ENCODE measurements at regions of chr7 and their contacts with region 1.

Region 1: GRCh38 chr7:42931834-42932651 is at the starts of genes MRPL32 and PSMA2:
- DNase-seq: peak; percentile 97
- H3K4me3 Mint-ChIP-seq: peak within 1 kb of the TSS; percentile 99
- H3K27ac Mint-ChIP-seq: peak within 1 kb of the TSS; percentile 91
- H3K4me1 Mint-ChIP-seq: peaks cover 69% of the 10 kb centered on the region
- H3K27me3 Mint-ChIP-seq: no peaks in the 10 kb centered on the region
- total RNA-seq, gene MRPL32: 81.5 and 82.0 TPM in 2 replicates
- total RNA-seq, gene PSMA2: 187 and 194 TPM in 2 replicates

Region 2: DNA sequence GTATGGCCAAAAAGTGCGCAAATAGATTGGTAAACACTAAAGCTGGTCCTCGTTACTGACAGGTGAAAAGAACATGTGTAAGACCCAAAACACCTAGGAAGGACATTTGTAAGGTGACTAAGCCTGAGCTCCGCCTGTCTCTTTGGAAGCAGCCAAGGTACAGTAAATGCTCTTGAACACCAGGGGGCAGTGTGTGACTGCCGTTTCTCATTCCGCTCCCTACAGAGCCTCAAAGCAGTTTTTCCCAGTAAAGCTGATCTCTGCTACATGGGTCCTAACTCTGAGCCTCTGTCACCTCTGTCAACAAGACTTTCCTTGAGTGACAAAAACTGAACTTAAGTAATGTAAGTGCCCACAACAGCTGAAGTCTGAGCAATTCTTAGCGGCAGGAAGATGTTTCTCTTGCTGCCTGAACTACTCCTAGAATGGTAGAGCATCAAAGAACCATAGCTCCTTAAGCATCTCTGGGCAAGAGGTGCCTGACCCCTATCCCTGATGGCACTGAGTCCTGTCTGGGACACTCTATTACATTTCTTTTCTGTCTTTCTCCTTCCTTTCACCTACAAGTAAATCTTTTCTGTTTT is 991.2 kb before region 1 on chr7:
- intact Hi-C with region 1: loop called (anchors 5 kb)
- DNase-seq: peak; percentile 35
- H3K4me3 Mint-ChIP-seq: no peak overlapping the region
- H3K27ac Mint-ChIP-seq: no peak overlapping the region
- H3K4me1 Mint-ChIP-seq: peaks cover 26% of the 10 kb centered on the region
- H3K27me3 Mint-ChIP-seq: peaks cover 22% of the 10 kb centered on the region

Region 3: GRCh38 chr7:42886129-42886528 is 45.9 kb before region 1 on chr7:
- intact Hi-C with region 1: loop called (anchors 2 kb)
- DNase-seq: no peak
- H3K4me3 Mint-ChIP-seq: no peak overlapping the region
- H3K27ac Mint-ChIP-seq: no peak overlapping the region
- H3K4me1 Mint-ChIP-seq: peaks cover 25% of the 10 kb centered on the region
- H3K27me3 Mint-ChIP-seq: peaks cover 7% of the 10 kb centered on the region

Region 4: GRCh38 chr7:42945821-42946626 is 14.0 kb after region 1 on chr7:
- intact Hi-C with region 1: no loop called
- DNase-seq: peak; percentile 38
- H3K4me3 Mint-ChIP-seq: peak overlapping the region; percentile 73
- H3K27ac Mint-ChIP-seq: peak overlapping the region; percentile 83
- H3K4me1 Mint-ChIP-seq: peaks cover 12% of the 10 kb centered on the region
- H3K27me3 Mint-ChIP-seq: no peaks in the 10 kb centered on the region

Region 5: DNA sequence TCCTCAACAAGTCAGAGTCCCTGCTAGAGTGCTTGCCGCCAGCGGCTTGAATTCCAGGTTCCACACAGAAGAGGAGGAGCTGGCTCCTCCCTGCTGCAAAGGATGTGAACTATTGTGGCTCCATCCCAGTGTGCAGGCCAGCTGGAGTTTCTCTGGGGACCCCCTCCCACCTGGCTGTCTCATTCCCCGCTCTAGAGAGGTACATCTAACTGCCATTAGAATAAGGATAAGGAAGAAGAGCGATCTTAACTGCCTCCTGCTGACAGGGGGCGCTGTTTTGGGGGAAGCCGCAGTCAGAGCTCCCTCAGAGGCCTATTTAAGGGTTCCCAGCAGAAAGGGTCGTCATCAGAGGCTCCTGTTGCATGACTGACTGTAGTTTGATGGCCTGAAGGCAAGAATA is 139.6 kb after region 1 on chr7:
- intact Hi-C with region 1: loop called (anchors 5 kb)
- DNase-seq: no peak
- H3K4me3 Mint-ChIP-seq: no peak overlapping the region
- H3K27ac Mint-ChIP-seq: no peak overlapping the region
- H3K4me1 Mint-ChIP-seq: peaks cover 25% of the 10 kb centered on the region
- H3K27me3 Mint-ChIP-seq: peaks cover 9% of the 10 kb centered on the region

Region 6: DNA sequence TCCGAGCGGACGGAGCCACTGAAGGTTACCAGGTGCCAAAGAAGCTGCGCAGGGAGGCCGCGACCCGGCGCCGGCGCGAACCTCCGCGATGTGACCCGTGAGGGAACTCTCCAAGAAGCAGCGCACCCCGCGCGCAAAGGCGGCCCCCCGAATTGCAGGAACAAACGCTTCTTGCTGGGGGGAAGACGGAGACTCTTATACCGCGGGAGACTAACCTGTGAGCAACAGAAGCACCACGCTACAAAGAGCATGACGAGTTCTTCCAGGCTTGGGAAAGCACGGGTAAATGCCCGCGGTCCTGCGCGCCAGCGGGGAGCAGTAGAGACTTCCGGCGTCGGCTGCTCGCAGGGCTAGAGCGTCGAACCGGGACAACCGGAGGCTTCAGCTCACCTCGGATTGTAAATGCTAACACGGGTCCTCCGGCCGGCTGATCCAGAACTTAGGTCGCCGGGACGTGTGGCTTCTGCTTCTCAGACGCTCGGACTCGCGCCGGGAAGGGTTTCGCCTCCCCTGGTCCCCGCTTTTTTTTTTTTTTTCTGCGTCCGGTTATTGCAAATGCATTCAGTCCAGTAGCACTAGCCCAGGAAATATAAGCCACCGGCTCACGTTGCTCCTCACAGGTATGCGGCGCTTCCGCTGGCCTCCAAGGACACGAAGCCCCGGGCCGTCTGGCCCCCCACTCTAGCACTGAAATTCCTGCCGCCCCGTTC is 797.3 kb after region 1 on chr7 and contains the start of gene COA1:
- intact Hi-C with region 1: loop called (anchors 2 kb)
- DNase-seq: peak; percentile 76
- H3K4me3 Mint-ChIP-seq: peak within 1 kb of the TSS; percentile 88
- H3K27ac Mint-ChIP-seq: peak within 1 kb of the TSS; percentile 76
- H3K4me1 Mint-ChIP-seq: peaks cover 28% of the 10 kb centered on the region
- H3K27me3 Mint-ChIP-seq: peaks cover 3% of the 10 kb centered on the region
- total RNA-seq, gene COA1: 81.7 and 88.6 TPM in 2 replicates

Region 7: GRCh38 chr7:43925984-43926797 is 994.1 kb after region 1 on chr7 and contains the start of gene UBE2D4:
- intact Hi-C with region 1: loop called (anchors 10 kb)
- DNase-seq: peak; percentile 88
- H3K4me3 Mint-ChIP-seq: peak within 1 kb of the TSS; percentile 95
- H3K27ac Mint-ChIP-seq: peak within 1 kb of the TSS; percentile 97
- H3K4me1 Mint-ChIP-seq: peaks cover 30% of the 10 kb centered on the region
- H3K27me3 Mint-ChIP-seq: peaks cover 2% of the 10 kb centered on the region
- total RNA-seq, gene UBE2D4: 15.3 and 17.7 TPM in 2 replicates

Measured in activated T-helper 1 cell treated with anti-CD3 and anti-CD28 coated beads, Interleukin-12 subunit alpha, Interleukin-12 subunit beta, Interleukin-2, Interleukin-4 antibody, amounts not matched to agents 30 ng/mL and 10 ng/mL and 1 ng/mL, durations not matched to agents 14 hours and 24 hours and 36 hours (primary cell).